CD14-positive monocyte (primary cell): ENCODE measurements at regions of chr2 and their contacts with region 1.

Region 1: DNA sequence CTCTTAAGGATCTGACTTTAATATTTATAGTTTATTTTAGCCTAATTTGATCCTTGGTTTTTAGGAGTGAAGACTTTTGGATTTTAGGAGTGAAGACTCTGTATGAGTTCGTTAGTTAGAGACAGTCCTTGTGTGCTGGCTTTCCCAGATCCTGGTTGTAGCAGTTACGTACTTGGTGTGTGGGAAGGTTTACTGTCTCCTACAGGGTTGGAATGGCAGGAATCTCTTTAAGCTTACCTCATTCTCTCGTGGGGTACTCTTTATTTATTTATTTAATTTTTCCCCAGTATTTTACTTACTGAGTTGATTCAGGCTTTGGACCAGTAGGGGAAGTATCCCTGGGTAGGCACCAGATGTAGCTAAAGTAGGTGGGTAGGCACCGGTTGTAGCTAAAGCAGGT is 1.8 kb upstream of the CXCR2 start:
- DNase-seq: no peak
- H3K4me3 ChIP-seq: no peak overlapping the region
- H3K4me3 Mint-ChIP-seq: no peak overlapping the region
- H3K27ac ChIP-seq: peak overlapping the region in 1 of 2 donors; percentile 87
- H3K27ac Mint-ChIP-seq: peak overlapping the region in 1 of 7 donors; percentile 28
- H3K4me1 ChIP-seq: peaks cover 50 to 51% of the 10 kb centered on the region in 2 donors
- H3K4me1 Mint-ChIP-seq: peaks cover 48% of the 10 kb centered on the region
- H3K27me3 ChIP-seq: no peaks in the 10 kb centered on the region
- H3K27me3 Mint-ChIP-seq: peaks cover 0 to 7% (median 0%) of the 10 kb centered on the region in 3 donors
- CTCF ChIP-seq: no peak

Region 2: DNA sequence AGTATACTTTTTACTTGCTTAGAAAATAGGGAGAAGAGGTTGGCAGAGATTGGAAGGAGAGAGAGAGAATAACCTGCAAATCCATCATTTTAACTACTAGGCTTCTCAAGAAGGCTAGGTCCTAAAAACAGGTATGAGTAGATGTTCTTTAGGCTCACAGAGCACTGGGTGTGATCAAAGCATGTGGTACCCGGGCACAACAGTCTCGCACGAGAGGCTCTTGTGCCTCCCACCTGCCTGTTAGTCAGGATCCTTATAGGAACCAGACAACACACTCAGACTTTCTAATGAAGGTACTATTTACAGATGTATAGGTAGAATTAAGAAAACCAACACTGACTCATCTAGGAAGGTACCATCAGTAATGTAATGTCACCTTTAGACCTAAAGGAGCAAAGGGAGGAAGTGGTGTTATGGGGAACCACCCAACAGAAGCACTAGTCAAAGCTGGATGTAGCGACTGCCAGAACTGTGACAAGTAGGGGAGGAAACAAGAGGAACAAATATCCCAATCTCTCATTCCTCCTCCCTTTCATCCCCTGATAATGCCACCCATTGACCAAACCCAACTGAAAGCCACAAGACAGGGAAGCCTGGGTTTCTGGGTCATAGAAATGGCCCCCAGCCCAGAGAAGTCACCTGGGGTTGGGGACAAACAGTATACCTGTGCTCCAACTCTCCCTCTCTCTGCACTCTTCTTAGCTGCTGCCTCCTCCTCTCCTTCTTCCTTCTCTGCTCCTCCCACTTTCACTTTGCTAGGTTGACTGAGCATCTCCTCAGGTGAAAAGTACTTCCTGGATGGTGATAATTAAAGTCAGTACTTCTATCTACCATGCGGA is 1735.7 kb before region 1 on chr2:
- intact Hi-C with region 1: loop called in 1 of 2 experiments (anchors 10 kb)
- DNase-seq: peak in 1 of 3 donors; percentile 25
- H3K4me3 ChIP-seq: no peak overlapping the region
- H3K4me3 Mint-ChIP-seq: no peak overlapping the region
- H3K27ac ChIP-seq: no peak overlapping the region
- H3K27ac Mint-ChIP-seq: peak overlapping the region in 1 of 7 donors; percentile 31
- H3K4me1 ChIP-seq: peaks cover 23% of the 10 kb centered on the region in 2 donors
- H3K4me1 Mint-ChIP-seq: peaks cover 26% of the 10 kb centered on the region
- H3K27me3 ChIP-seq: no peaks in the 10 kb centered on the region
- H3K27me3 Mint-ChIP-seq: peaks cover 0 to 2% (median 1%) of the 10 kb centered on the region in 3 donors
- CTCF ChIP-seq: no peak

Region 3: GRCh38 chr2:217972490-217972889 is 151.5 kb before region 1 on chr2:
- intact Hi-C with region 1: no loop called
- DNase-seq: no peak
- H3K4me3 ChIP-seq: no peak overlapping the region
- H3K4me3 Mint-ChIP-seq: no peak overlapping the region
- H3K27ac ChIP-seq: no peak overlapping the region
- H3K27ac Mint-ChIP-seq: peak overlapping the region in 1 of 7 donors; percentile 29
- H3K4me1 ChIP-seq: no peaks in the 10 kb centered on the region
- H3K4me1 Mint-ChIP-seq: no peaks in the 10 kb centered on the region
- H3K27me3 ChIP-seq: no peaks in the 10 kb centered on the region
- H3K27me3 Mint-ChIP-seq: peaks cover 0 to 5% (median 3%) of the 10 kb centered on the region in 3 donors
- CTCF ChIP-seq: no peak